ENCODE measurements at regions of chr1 and their contacts with region 1.

Region 1: DNA sequence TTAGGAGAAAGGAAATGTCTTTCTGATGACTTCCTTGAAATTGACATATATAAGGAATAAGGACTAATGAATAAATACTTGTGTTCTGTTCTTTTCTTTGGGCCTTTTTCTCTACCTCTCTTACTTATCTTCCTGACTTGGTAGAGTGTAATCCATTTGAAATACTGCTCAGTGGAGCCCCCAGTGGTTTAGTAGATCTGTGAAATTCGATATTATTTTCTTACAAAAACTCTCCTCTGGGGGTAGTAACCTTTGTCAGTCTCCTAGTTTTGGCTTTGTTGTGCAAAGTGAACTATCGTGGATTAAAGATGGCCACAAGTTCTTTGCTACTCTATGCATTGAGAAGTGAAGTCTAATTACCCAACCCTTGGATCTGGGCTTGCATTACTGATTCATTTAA is 48.8 kb downstream of the DUSP10 start:
- DNase-seq: no peak
- ATAC-seq: no peak
- H3K4me3 ChIP-seq: no peak overlapping the region
- H3K27ac ChIP-seq: no peak overlapping the region
- H3K4me1 ChIP-seq: peaks cover 0 to 14% (median under 1%) of the 10 kb centered on the region in 12 donors
- H3K27me3 ChIP-seq: no peaks in the 10 kb centered on the region
- CTCF ChIP-seq: peak in 2 of 12 donors; percentile 12 to 16
- POLR2A ChIP-seq: no peak

Region 2: GRCh38 chr1:221801773-221802516 is 108.9 kb after region 1 on chr1:
- intact Hi-C with region 1: loop called in 1 of 10 experiments (anchors 5 kb)
- DNase-seq: no peak
- ATAC-seq: no peak
- H3K4me3 ChIP-seq: no peak overlapping the region
- H3K27ac ChIP-seq: no peak overlapping the region
- H3K4me1 ChIP-seq: no peaks in the 10 kb centered on the region
- H3K27me3 ChIP-seq: no peaks in the 10 kb centered on the region
- CTCF ChIP-seq: no peak
- POLR2A ChIP-seq: no peak